Activated CD4-positive, alpha-beta T cell treated with anti-CD3 and anti-CD28 coated beads for 36 hours (primary cell): ENCODE measurements at regions of chr10 and their contacts with region 1.

Region 1: DNA sequence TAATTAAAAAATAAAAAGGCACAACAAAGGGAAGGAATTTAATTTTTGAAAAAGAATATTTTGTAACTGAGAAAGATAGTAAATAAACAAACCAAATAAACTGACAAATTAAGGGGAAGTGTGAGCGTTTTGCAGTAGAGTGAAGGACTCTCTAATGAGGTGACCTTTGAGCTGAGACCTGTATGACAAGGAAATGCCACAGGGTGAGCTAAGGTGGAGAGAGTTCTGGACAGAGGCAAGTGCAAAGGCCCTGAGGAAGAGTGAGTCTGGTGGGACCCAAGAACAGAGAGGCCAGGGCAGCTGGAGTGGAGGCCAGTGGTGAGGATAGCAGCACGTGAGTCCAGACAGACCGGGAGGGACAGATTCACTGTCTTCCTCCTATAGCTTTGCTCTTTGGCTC is 179.4 kb downstream of the CACNB2 start:
- DNase-seq: no peak
- ATAC-seq: no peak
- H3K4me3 Mint-ChIP-seq: no peak overlapping the region
- H3K27ac Mint-ChIP-seq: no peak overlapping the region
- H3K4me1 Mint-ChIP-seq: no peaks in the 10 kb centered on the region
- H3K27me3 Mint-ChIP-seq: peaks cover 2% of the 10 kb centered on the region

Region 2: DNA sequence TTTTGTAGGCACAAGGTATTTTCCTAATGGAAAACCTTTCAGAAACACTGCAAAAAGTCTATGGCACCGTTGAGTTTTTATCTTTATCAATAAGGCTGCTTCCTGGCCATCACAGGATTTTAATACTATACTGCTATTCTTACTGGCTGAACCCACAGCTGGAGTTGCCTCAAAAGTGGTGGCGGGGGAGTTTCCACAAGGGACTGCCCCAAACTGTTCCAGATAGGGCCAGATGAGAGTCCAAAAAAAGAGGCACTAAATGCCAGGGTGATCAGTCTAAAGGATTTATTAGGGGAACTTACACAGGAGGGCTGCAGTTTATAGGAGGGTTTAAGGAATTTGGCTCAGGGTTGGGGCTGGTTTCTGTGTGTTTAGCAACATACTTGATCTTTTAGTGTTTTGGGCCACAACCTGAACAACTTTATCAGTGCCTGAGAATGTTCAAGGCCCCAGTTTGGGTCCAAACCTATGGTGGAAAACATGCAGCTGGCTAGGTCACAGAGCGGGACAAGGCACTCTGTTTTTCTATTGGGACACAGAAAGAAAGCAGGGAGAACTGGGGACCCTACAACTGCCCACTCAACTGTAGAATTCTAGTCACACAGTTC is 634.3 kb before region 1 on chr10:
- CTCF ChIA-PET with region 1: no interaction called
- POLR2A ChIA-PET with region 1: no interaction called
- intact Hi-C with region 1: no loop called
- DNase-seq: peak; percentile 63
- ATAC-seq: peak; percentile 77
- H3K4me3 Mint-ChIP-seq: no peak overlapping the region
- H3K27ac Mint-ChIP-seq: peak overlapping the region; percentile 10
- H3K4me1 Mint-ChIP-seq: peaks cover 35% of the 10 kb centered on the region
- H3K27me3 Mint-ChIP-seq: no peaks in the 10 kb centered on the region

Region 3: GRCh38 chr10:18290651-18291313 is 28.8 kb before region 1 on chr10:
- CTCF ChIA-PET with region 1: no interaction called
- POLR2A ChIA-PET with region 1: interaction called, 12 read pairs
- intact Hi-C with region 1: no loop called
- DNase-seq: no peak
- ATAC-seq: no peak
- H3K4me3 Mint-ChIP-seq: no peak overlapping the region
- H3K27ac Mint-ChIP-seq: no peak overlapping the region
- H3K4me1 Mint-ChIP-seq: no peaks in the 10 kb centered on the region
- H3K27me3 Mint-ChIP-seq: no peaks in the 10 kb centered on the region